Motor neuron (in vitro differentiated cells): ENCODE measurements at regions of chr12 and their contacts with region 1.

Region 1: DNA sequence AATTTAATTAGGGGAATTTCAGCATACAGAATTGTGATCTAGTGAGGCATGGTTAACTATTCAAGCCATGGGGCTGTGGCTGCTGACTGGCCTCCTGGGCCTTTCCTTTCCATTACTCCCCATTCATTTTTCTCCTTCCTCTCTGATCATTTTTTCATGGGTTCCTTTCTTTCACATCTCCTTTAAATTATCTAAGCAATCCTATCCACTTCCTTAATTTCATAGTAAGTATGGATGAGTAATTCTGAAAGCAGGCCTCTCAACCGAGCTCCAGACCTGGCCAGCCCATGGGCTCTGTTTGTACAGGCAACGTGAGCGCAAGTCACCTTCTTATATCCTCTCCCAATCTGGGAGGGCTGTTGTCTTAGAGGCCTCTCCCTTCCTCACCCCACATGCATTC is 13.4 kb downstream of the CKAP4 start:
- ATAC-seq: peak in 1 of 8 experiments; percentile 31
- H3K4me3 ChIP-seq: no peak overlapping the region
- H3K27ac ChIP-seq: no peak overlapping the region
- H3K4me1 ChIP-seq: peaks cover 0 to 6% of the 10 kb centered on the region in 2 donors

Region 2: GRCh38 chr12:106282457-106283097 is 48.1 kb after region 1 on chr12:
- in situ Hi-C with region 1: loop called in 1 of 9 experiments (anchors 10 kb)
- ATAC-seq: peak; percentile 47 to 89 (median 62)
- H3K4me3 ChIP-seq: no peak overlapping the region
- H3K27ac ChIP-seq: no peak overlapping the region
- H3K4me1 ChIP-seq: no peaks in the 10 kb centered on the region